Heart right ventricle (tissue), 16 donors: ENCODE measurements at regions of chr17 and their contacts with region 1.

Region 1: GRCh38 chr17:65756760-65757159 is 195.3 kb upstream of the AXIN2 start:
- DNase-seq: no peak
- ATAC-seq: no peak
- H3K4me3 ChIP-seq: no peak overlapping the region
- H3K27ac ChIP-seq: no peak overlapping the region
- H3K4me1 ChIP-seq: peaks cover 0 to 8% (median 0%) of the 10 kb centered on the region in 9 donors
- H3K27me3 ChIP-seq: no peaks in the 10 kb centered on the region
- CTCF ChIP-seq: no peak

Region 2: GRCh38 chr17:65742403-65743307 is 14.1 kb before region 1 on chr17:
- intact Hi-C with region 1: loop called in 1 of 10 experiments (anchors 1 kb)
- DNase-seq: no peak
- ATAC-seq: peak in 2 of 8 donors; percentile 37 to 57
- H3K4me3 ChIP-seq: no peak overlapping the region
- H3K27ac ChIP-seq: peak overlapping the region in 4 of 10 donors; percentile 4 to 43 (median 32)
- H3K4me1 ChIP-seq: peaks cover 0 to 20% (median 0%) of the 10 kb centered on the region in 9 donors
- H3K27me3 ChIP-seq: no peaks in the 10 kb centered on the region
- CTCF ChIP-seq: no peak